ENCODE measurements at regions of chr7 and their contacts with region 1.

Region 1: GRCh38 chr7:5997222-5997808 is 11.5 kb downstream of the PMS2 start:
- DNase-seq: peak; percentile 42

Region 2: GRCh38 chr7:6008668-6009611 is 11.6 kb after region 1 on chr7 and contains the starts of genes AIMP2 and PMS2:
- CTCF ChIA-PET with region 1: interaction called, 6 read pairs
- POLR2A ChIA-PET with region 1: interaction called, 10 read pairs
- DNase-seq: peak; percentile 88

Region 3: DNA sequence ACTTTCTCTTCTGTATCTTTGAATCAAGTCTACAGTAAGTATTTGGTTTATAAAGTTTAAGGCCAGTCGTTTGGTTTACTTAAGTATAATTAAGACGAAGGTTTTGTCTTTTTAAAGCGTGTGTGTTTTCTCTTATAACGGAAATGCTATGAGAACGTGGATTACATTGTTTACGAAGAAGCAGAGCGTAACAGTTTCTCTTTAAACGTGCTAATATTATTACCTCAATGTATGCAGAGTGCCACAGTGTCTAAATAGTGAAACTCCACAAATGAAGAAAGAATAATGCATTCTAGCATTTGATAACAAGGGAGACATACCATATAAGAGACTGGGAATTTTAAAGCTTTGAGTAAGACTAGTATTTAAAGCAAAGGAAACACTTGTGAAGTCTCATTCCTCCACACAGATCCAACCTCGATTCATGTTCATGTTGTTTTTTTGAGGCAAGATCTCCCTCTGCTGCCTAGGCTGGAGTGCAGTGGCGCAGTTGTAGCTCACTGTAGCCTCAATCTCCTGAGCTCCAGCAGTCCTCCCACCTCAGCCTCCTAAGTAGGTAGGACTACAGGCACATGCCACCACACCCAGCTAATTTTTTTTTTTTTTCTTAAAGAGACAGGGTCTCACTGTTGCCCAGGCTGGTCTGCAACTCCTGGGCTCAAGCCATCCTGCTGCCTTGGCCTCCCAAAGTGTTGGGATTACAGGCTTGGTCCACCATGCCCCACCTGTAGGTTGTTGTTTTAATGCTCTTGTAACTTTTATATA is 109.0 kb after region 1 on chr7:
- CTCF ChIA-PET with region 1: interaction called, 19 read pairs
- POLR2A ChIA-PET with region 1: no interaction called
- DNase-seq: no peak